ENCODE measurements at regions of chr7 and their contacts with region 1.

Region 1: GRCh38 chr7:45923290-45923689 is 2.2 kb upstream of the IGFBP3 start:
- DNase-seq: peak; percentile 73
- ATAC-seq: no peak
- H3K4me3 Mint-ChIP-seq: no peak overlapping the region
- H3K27ac Mint-ChIP-seq: no peak overlapping the region
- H3K4me1 Mint-ChIP-seq: peaks cover 23% of the 10 kb centered on the region
- H3K27me3 Mint-ChIP-seq: peaks cover 49% of the 10 kb centered on the region
- CTCF ChIP-seq: peak; percentile 81

Region 2: GRCh38 chr7:45890902-45891461 is 32.3 kb before region 1 on chr7:
- CTCF ChIA-PET with region 1: interaction called, 10 read pairs
- POLR2A ChIA-PET with region 1: no interaction called
- intact Hi-C with region 1: no loop called
- DNase-seq: no peak
- ATAC-seq: no peak
- H3K4me3 Mint-ChIP-seq: no peak overlapping the region
- H3K27ac Mint-ChIP-seq: no peak overlapping the region
- H3K4me1 Mint-ChIP-seq: peaks cover 2% of the 10 kb centered on the region
- H3K27me3 Mint-ChIP-seq: peaks cover 49% of the 10 kb centered on the region
- CTCF ChIP-seq: peak; percentile 69

Region 3: DNA sequence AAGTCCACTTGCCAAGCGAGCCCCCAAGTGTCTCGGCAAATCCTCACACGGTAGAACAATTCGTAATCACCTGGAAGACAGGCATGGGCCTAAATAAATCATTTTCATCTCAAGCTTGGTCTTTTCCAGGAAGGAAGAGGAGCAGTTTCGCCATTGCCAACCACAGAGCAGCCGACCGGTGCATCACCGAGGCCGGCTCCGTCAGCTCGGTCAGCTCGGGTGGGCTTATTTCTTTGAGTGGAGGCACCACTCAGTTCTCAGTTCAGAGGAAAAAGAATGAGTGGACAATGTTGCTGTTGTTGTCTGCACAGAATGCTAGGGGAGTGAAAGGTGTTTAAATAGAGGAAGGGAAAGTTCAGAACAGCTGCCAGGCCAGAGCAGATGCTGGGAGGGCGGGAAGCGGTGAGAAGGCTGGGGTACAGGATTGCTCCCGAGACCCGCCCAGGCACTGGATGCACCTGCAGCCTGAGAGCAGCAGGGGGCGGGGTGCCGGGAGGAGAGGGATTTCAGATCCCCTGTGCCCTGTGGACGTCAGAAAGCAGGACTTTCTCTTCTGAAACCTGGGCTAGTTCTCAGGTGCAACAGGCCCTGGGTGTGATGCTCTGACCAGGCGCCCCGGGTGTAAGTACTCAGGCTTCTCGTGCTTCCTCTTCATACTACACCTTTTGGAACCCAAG is 15.5 kb after region 1 on chr7:
- CTCF ChIA-PET with region 1: interaction called, 21 read pairs
- POLR2A ChIA-PET with region 1: no interaction called
- intact Hi-C with region 1: no loop called
- DNase-seq: no peak
- ATAC-seq: no peak
- H3K4me3 Mint-ChIP-seq: no peak overlapping the region
- H3K27ac Mint-ChIP-seq: no peak overlapping the region
- H3K4me1 Mint-ChIP-seq: peaks cover 13% of the 10 kb centered on the region
- H3K27me3 Mint-ChIP-seq: peaks cover 15% of the 10 kb centered on the region
- CTCF ChIP-seq: no peak

Region 4: GRCh38 chr7:45993621-45994020 is 70.3 kb after region 1 on chr7:
- CTCF ChIA-PET with region 1: no interaction called
- POLR2A ChIA-PET with region 1: no interaction called
- intact Hi-C with region 1: no loop called
- DNase-seq: no peak
- ATAC-seq: no peak
- H3K4me3 Mint-ChIP-seq: no peak overlapping the region
- H3K27ac Mint-ChIP-seq: no peak overlapping the region
- H3K4me1 Mint-ChIP-seq: no peaks in the 10 kb centered on the region
- H3K27me3 Mint-ChIP-seq: no peaks in the 10 kb centered on the region
- CTCF ChIP-seq: no peak